Heart left ventricle (tissue), 16 donors: ENCODE measurements at regions of chr3 and their contacts with region 1.

Region 1: DNA sequence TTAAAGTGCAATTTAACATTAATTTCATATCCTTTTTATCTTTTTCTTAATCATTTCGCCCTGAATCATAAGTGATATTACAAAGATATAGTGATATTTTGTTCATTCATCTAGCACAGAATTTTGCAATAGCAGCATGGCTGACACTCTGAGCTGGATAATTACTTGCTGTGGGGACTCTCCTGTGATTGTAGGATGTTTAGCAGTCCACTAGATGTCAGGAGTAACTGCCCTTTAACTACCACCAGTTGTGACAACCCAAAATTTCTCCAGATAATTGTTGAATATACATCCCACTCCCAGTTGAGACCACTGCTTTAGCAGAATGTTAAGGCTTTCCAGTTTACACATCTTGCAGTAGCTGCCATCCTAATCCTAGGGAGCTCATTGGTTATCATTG is 196.8 kb upstream of the MBNL1 start:
- DNase-seq: no peak
- ATAC-seq: peak in 3 of 4 donors; percentile 52 to 68 (median 55)
- H3K4me3 ChIP-seq: no peak overlapping the region
- H3K27ac ChIP-seq: no peak overlapping the region
- H3K4me1 ChIP-seq: peaks cover 0 to 4% (median 0%) of the 10 kb centered on the region in 12 donors
- H3K27me3 ChIP-seq: no peaks in the 10 kb centered on the region
- CTCF ChIP-seq: peak; percentile 8 to 60 (median 41)
- POLR2A ChIP-seq: no peak

Region 2: GRCh38 chr3:152121292-152121654 is 49.3 kb after region 1 on chr3:
- intact Hi-C with region 1: no loop called
- DNase-seq: no peak
- ATAC-seq: peak in 1 of 4 donors; percentile 73
- H3K4me3 ChIP-seq: no peak overlapping the region
- H3K27ac ChIP-seq: peak overlapping the region in 2 of 12 donors; percentile 36 to 50
- H3K4me1 ChIP-seq: no peaks in the 10 kb centered on the region
- H3K27me3 ChIP-seq: no peaks in the 10 kb centered on the region
- CTCF ChIP-seq: no peak
- POLR2A ChIP-seq: no peak

Region 3: DNA sequence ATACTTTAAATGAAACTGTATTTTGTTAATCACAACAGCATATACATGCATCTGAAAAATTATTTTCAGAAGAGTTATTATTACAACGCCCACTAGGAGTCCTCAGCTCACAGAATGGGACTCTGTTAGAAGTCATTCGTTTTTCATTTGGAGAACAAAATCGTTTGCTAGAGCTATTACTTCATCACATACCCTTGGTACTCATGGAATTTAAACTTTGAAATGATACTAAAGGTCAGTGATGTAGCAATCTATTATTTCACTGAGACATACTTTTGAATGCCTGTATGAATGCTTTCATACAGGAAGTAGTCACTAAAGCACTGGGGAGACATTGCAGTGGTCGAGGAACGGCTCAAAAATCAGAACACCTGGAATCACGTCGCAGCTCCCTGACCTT is 394.9 kb after region 1 on chr3:
- intact Hi-C with region 1: loop called in 5 of 10 experiments (anchors 5 to 10 kb)
- DNase-seq: no peak
- ATAC-seq: peak in 3 of 4 donors; percentile 33 to 61 (median 51)
- H3K4me3 ChIP-seq: no peak overlapping the region
- H3K27ac ChIP-seq: peak overlapping the region in 1 of 12 donors; percentile 50
- H3K4me1 ChIP-seq: peaks cover 0 to 25% (median 14%) of the 10 kb centered on the region in 12 donors
- H3K27me3 ChIP-seq: no peaks in the 10 kb centered on the region
- CTCF ChIP-seq: peak; percentile 10 to 63 (median 42)
- POLR2A ChIP-seq: no peak

Region 4: DNA sequence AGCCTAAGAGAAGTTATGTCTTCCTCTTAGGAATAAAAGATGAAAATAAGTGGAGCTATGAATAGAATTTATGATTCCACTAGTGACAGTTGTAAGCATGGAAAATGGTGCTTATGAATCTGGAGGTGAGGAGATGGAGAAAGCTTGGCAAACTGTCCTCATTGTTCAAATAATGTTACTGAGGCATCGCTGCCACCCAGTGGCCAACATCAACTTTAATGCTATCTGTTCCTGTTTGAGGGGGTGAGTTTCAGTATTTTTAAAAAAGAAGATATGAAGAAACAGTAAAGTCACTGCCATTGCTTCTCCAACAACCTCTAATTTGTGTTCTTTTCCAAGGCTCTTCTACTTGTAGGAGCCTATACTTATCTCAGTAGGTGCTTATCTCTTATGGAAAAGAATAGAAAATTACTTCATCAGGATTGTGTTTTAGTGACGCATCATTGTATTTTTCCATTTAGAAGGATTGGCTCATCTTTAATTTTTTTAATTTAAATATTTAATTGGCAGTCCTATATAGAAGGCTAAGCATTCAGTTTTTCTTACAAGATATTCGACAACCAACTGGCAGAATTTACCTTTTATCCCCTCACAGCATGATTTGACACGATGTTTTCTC is 502.6 kb after region 1 on chr3:
- intact Hi-C with region 1: loop called in 1 of 10 experiments (anchors 10 kb)
- DNase-seq: peak; percentile 49 to 78 (median 56)
- ATAC-seq: peak; percentile 78 to 90 (median 86)
- H3K4me3 ChIP-seq: no peak overlapping the region
- H3K27ac ChIP-seq: peak overlapping the region in 1 of 12 donors; percentile 16
- H3K4me1 ChIP-seq: peaks cover 0 to 11% (median 1%) of the 10 kb centered on the region in 12 donors
- H3K27me3 ChIP-seq: no peaks in the 10 kb centered on the region
- CTCF ChIP-seq: peak; percentile 36 to 71 (median 65)
- POLR2A ChIP-seq: no peak